AG04450 (cell line): ENCODE measurements at regions of chr17 and their contacts with region 1.

Region 1: DNA sequence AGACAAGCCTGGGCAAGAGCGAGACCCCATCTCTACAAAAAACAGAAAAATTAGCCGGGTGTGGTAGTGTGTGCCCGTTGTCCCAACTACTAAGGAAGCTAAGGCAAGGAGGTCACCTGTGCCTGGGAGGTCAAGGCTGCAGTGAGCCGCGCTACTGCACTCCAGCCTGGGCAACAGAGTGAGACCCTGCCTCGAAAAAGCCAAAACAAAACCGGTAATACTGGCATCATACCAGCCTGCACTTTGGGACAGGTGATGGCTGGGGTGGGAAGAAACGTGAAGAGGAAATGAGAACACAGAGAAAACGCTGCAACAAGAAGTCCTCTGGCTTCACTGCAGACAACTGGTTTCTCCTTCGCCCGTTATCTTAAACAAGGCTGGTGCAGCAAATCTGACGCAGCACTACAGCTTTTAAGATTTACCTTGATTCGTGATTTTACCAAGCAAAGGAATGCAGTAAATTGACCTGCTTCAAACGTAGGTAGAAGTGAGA is 725 bp upstream of the CASC3 start:
- DNase-seq: no peak
- H3K4me3 ChIP-seq: peak overlapping the region; percentile 51
- H3K27ac ChIP-seq: peak overlapping the region; percentile 63
- H3K27me3 ChIP-seq: no peaks in the 10 kb centered on the region
- CTCF ChIP-seq: no peak

Region 2: GRCh38 chr17:39777534-39778365 is 361.9 kb before region 1 on chr17:
- CTCF ChIA-PET with region 1: no interaction called
- POLR2A ChIA-PET with region 1: no interaction called
- DNase-seq: no peak
- H3K4me3 ChIP-seq: no peak overlapping the region
- H3K27ac ChIP-seq: no peak overlapping the region
- H3K27me3 ChIP-seq: peaks cover 69% of the 10 kb centered on the region
- CTCF ChIP-seq: no peak

Region 3: GRCh38 chr17:40021451-40021971 is 118.1 kb before region 1 on chr17:
- CTCF ChIA-PET with region 1: no interaction called
- POLR2A ChIA-PET with region 1: interaction called, 12 read pairs
- DNase-seq: no peak
- H3K4me3 ChIP-seq: no peak overlapping the region
- H3K27ac ChIP-seq: peak overlapping the region; percentile 75
- H3K27me3 ChIP-seq: no peaks in the 10 kb centered on the region
- CTCF ChIP-seq: no peak

Region 4: GRCh38 chr17:40026816-40027613 is 112.6 kb before region 1 on chr17:
- CTCF ChIA-PET with region 1: no interaction called
- POLR2A ChIA-PET with region 1: interaction called, 12 read pairs
- DNase-seq: peak; percentile 62
- H3K4me3 ChIP-seq: no peak overlapping the region
- H3K27ac ChIP-seq: peak overlapping the region; percentile 21
- H3K27me3 ChIP-seq: no peaks in the 10 kb centered on the region
- CTCF ChIP-seq: peak; percentile 90

Region 5: DNA sequence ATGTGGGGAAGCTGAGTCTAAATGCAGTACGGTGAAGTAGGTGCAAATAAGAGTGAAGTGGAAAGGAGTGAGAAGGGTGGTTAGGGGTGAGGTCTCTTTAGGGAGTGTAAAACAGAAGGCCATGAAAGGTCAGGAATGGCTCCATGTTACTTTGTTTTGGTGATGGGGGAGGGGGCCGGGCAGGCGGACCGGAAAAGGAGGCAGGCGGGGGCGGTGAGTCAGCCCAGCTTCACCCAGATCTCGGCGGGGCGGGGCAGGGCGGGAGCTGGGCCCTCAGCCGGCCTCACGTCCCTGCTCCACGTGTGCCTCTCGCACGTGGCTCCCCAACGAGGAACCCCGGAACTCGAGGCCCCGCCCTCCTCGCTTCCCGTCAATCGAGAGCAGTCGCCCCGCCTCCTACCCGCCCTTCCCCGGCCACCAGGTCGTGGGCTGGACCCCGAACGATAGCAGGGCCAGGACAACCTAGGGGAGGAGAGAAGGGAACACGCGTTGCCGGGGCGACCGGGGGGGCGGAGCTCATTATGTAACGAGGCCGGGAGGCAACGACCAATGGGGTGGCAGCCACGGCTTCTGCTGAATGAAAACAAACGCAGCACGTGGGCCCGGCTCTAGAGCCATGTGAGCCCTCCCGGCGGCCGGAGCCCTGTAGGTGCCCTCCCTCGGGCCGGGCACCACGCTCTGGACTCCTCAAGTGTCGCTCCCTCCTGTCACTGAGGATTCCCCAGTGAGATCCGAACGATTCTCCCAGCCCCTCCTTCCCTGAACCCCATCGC is 40.6 kb before region 1 on chr17:
- CTCF ChIA-PET with region 1: no interaction called
- POLR2A ChIA-PET with region 1: interaction called, 12 read pairs
- DNase-seq: peak; percentile 98
- H3K4me3 ChIP-seq: peak overlapping the region; percentile 76
- H3K27ac ChIP-seq: peak overlapping the region; percentile 85
- H3K27me3 ChIP-seq: no peaks in the 10 kb centered on the region
- CTCF ChIP-seq: no peak

Region 6: GRCh38 chr17:40121181-40122135 is 18.2 kb before region 1 on chr17 and contains the start of gene MSL1:
- CTCF ChIA-PET with region 1: interaction called, 13 read pairs
- POLR2A ChIA-PET with region 1: interaction called, 38 read pairs
- DNase-seq: no peak
- H3K4me3 ChIP-seq: peak within 1 kb of the TSS; percentile 97
- H3K27ac ChIP-seq: peak within 1 kb of the TSS; percentile 85
- H3K27me3 ChIP-seq: no peaks in the 10 kb centered on the region
- CTCF ChIP-seq: no peak
- polyA plus RNA-seq, gene MSL1: 69.8 and 92.2 TPM in 2 replicates

Region 7: GRCh38 chr17:40168262-40168832 is 28.7 kb after region 1 on chr17:
- CTCF ChIA-PET with region 1: interaction called, 3 read pairs
- POLR2A ChIA-PET with region 1: interaction called, 14 read pairs
- DNase-seq: peak; percentile 41
- H3K4me3 ChIP-seq: no peak overlapping the region
- H3K27ac ChIP-seq: no peak overlapping the region
- H3K27me3 ChIP-seq: no peaks in the 10 kb centered on the region
- CTCF ChIP-seq: peak; percentile 78